IMR-90 (cell line): ENCODE measurements at regions of chr2 and their contacts with region 1.

Region 1: GRCh38 chr2:54899576-54900200 is 150.6 kb downstream of the RTN4 start:
- DNase-seq: peak; percentile 70
- ATAC-seq: peak; percentile 61
- H3K4me3 ChIP-seq: no peak overlapping the region
- H3K27ac ChIP-seq: no peak overlapping the region
- H3K4me1 ChIP-seq: peaks cover 7% of the 10 kb centered on the region
- H3K27me3 ChIP-seq: no peaks in the 10 kb centered on the region; the same call in 1 of the 2 replicates
- CTCF ChIP-seq: peak; percentile 84
- POLR2A ChIP-seq: no peak
- RAD21 ChIP-seq: peak; percentile 86

Region 2: DNA sequence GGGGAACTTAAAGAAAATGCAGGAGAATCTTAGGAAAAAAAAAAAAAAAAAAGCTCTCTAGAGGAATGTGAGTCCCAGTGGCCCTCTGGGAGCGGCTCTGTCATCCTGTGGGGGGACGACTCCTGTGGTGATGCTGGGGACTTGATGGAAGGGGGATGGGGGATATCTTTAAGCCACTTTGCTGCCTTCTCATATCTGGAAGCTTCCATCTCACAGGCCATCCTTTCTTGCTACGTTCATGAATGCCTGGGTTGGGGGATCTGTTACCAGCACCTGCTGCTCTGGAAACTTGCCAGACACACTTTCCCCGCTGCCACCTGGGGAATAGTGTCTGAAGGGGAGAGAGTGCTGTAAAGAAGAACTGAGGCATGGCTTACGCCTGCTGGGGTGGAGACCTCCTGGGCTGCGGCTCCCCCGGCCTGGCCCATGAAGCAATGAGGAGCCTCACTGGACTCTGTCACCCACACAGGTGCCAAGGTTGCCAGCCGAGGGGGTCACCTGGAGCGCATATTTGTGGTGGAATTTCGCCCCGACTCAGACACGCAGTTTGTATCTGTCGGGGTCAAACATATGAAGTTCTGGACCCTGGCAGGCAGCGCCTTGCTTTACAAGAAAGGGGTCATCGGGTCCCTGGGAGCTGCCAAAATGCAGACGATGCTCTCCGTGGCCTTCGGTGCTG is 57.8 kb after region 1 on chr2:
- CTCF ChIA-PET with region 1: interaction called, 3 read pairs
- POLR2A ChIA-PET with region 1: no interaction called
- dilution Hi-C with region 1: no loop called
- in situ Hi-C with region 1: no loop called
- intact Hi-C with region 1: loop called (anchors 1 kb)
- DNase-seq: no peak
- ATAC-seq: no peak
- H3K4me3 ChIP-seq: no peak overlapping the region
- H3K27ac ChIP-seq: no peak overlapping the region
- H3K4me1 ChIP-seq: peaks cover 2% of the 10 kb centered on the region
- H3K27me3 ChIP-seq: no peaks in the 10 kb centered on the region
- CTCF ChIP-seq: no peak
- POLR2A ChIP-seq: no peak
- RAD21 ChIP-seq: no peak